Naive thymus-derived CD4-positive, alpha-beta T cell (primary cell): ENCODE measurements at regions of chr17 and their contacts with region 1.

Region 1: DNA sequence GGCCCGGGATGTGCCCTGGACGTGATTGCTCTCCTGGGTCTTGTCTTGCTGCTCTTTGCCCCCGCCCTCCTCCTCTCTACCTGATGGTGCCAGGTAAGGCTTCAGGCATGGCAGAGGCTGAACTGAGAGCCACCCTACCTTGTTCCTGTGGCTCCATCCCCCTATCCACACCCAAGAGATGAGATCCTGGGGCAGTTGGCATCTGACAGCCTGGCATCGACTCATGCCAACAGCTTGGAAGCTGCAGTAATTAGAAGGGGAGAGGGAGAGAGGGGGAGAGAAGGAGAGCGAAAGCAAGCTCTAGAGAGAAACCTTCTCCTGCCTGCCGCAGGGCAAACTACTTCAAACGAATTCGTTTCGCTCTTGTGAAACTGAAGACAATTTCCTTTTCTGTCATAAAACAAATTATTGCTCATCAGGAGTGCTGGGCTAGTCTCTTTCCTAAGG is 13.8 kb upstream of the SP6 start:
- DNase-seq: no peak
- ATAC-seq: no peak
- H3K4me3 ChIP-seq: no peak overlapping the region
- H3K4me3 Mint-ChIP-seq: peak overlapping the region in 9 of 10 donors; percentile 4 to 66 (median 42)
- H3K27ac ChIP-seq: peak overlapping the region; percentile 2
- H3K27ac Mint-ChIP-seq: peak overlapping the region in 4 of 9 donors; percentile 18 to 60 (median 30)
- H3K4me1 ChIP-seq: no peaks in the 10 kb centered on the region
- H3K4me1 Mint-ChIP-seq: peaks cover 0 to 28% (median 16%) of the 10 kb centered on the region in 7 donors
- H3K27me3 ChIP-seq: no peaks in the 10 kb centered on the region
- H3K27me3 Mint-ChIP-seq: peaks cover 0 to 24% (median 4%) of the 10 kb centered on the region in 5 donors

Region 2: GRCh38 chr17:47850692-47851573 is 13.9 kb before region 1 on chr17 and contains the start of gene SP6:
- CTCF ChIA-PET with region 1: interaction called, 4 read pairs
- POLR2A ChIA-PET with region 1: no interaction called
- intact Hi-C with region 1: loop called in 1 of 2 experiments (anchors 2 kb)
- DNase-seq: peak in 4 of 9 donors; percentile 24 to 71 (median 38)
- ATAC-seq: peak; percentile 77
- H3K4me3 ChIP-seq: peak within 1 kb of the TSS; percentile 20
- H3K4me3 Mint-ChIP-seq: peak within 1 kb of the TSS; percentile 48 to 80 (median 68)
- H3K27ac ChIP-seq: no peak within 1 kb of the TSS
- H3K27ac Mint-ChIP-seq: peak within 1 kb of the TSS in 3 of 9 donors; percentile 11 to 51 (median 13)
- H3K4me1 ChIP-seq: peaks cover 6 to 14% of the 10 kb centered on the region in 2 donors
- H3K4me1 Mint-ChIP-seq: peaks cover 18 to 39% (median 22%) of the 10 kb centered on the region in 7 donors
- H3K27me3 ChIP-seq: peaks cover 6 to 39% of the 10 kb centered on the region in 2 donors
- H3K27me3 Mint-ChIP-seq: peaks cover 63 to 94% (median 77%) of the 10 kb centered on the region in 5 donors
- total RNA-seq, gene SP6: 0.16 to 0.29 (median 0.22) TPM in 3 of 5 experiments, not detected in the others